Activated CD4-positive, alpha-beta T cell treated with anti-CD3 and anti-CD28 coated beads for 36 hours (primary cell): ENCODE measurements at regions of chr14 and their contacts with region 1.

Region 1: GRCh38 chr14:50830932-50831725 is at the start of gene NIN:
- DNase-seq: peak; percentile 84
- ATAC-seq: peak; percentile 89
- H3K4me3 Mint-ChIP-seq: peak within 1 kb of the TSS; percentile 91
- H3K27ac Mint-ChIP-seq: peak within 1 kb of the TSS; percentile 88
- H3K4me1 Mint-ChIP-seq: peaks cover 56% of the 10 kb centered on the region
- H3K27me3 Mint-ChIP-seq: peaks cover 6% of the 10 kb centered on the region
- total RNA-seq, gene NIN: 47.5 to 53.8 TPM

Region 2: DNA sequence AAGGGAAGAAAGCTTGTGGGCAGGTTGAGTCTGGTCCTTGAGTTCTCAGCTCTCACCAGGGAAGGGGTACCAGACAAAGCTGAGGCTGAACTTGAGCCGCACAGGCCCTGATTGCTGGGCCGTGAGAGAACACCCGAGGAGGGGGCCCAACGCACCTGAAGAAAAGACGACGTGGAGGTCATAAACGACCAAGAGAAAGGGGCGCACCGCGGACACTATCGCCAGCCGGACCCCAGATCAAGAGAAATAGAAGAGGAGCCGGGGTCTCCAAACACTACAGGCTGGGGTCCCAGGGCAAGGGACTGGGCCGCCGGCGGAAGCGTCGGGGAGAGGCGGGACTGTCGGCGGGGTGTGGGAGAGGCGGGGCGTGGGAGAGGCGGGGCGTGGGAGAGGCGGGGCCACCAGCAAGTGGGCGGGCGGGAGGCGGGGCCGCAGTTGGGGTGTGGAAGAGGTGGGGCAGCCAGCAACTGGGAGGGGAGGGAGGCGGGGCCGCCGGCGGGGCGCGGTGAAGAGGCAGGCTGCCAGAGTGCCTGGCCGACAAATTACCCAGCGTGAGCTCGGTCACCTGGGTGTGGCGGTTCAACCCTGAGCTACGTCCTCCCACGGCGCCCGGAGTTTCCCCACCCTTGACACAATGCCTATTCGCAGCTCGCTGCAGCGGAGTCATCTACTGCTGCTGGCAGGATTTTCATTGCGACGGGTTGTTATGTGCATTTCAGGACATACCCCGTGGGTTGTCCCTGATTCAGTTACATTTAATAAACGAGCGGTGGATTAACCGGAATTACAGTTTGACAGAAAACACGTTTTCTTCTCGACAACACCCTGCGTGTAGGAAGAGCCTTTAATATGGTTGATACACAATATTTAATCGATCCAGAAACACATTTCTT is 963.1 kb before region 1 on chr14:
- CTCF ChIA-PET with region 1: no interaction called
- POLR2A ChIA-PET with region 1: no interaction called
- intact Hi-C with region 1: loop called in 1 of 2 experiments (anchors 5 kb)
- DNase-seq: peak; percentile 100
- ATAC-seq: peak; percentile 87
- H3K4me3 Mint-ChIP-seq: peak overlapping the region; percentile 98
- H3K27ac Mint-ChIP-seq: peak overlapping the region; percentile 96
- H3K4me1 Mint-ChIP-seq: peaks cover 22% of the 10 kb centered on the region
- H3K27me3 Mint-ChIP-seq: no peaks in the 10 kb centered on the region

Region 3: GRCh38 chr14:50785457-50786063 is 45.6 kb before region 1 on chr14:
- CTCF ChIA-PET with region 1: interaction called, 21 read pairs
- POLR2A ChIA-PET with region 1: interaction called, 4 read pairs
- intact Hi-C with region 1: loop called (anchors 2 kb)
- DNase-seq: no peak
- ATAC-seq: no peak
- H3K4me3 Mint-ChIP-seq: no peak overlapping the region
- H3K27ac Mint-ChIP-seq: peak overlapping the region; percentile 6
- H3K4me1 Mint-ChIP-seq: peaks cover 66% of the 10 kb centered on the region
- H3K27me3 Mint-ChIP-seq: no peaks in the 10 kb centered on the region

Region 4: GRCh38 chr14:51228890-51229289 is 397.8 kb after region 1 on chr14:
- CTCF ChIA-PET with region 1: no interaction called
- POLR2A ChIA-PET with region 1: no interaction called
- intact Hi-C with region 1: no loop called
- DNase-seq: no peak
- ATAC-seq: no peak
- H3K4me3 Mint-ChIP-seq: no peak overlapping the region
- H3K27ac Mint-ChIP-seq: no peak overlapping the region
- H3K4me1 Mint-ChIP-seq: no peaks in the 10 kb centered on the region
- H3K27me3 Mint-ChIP-seq: no peaks in the 10 kb centered on the region

Region 5: DNA sequence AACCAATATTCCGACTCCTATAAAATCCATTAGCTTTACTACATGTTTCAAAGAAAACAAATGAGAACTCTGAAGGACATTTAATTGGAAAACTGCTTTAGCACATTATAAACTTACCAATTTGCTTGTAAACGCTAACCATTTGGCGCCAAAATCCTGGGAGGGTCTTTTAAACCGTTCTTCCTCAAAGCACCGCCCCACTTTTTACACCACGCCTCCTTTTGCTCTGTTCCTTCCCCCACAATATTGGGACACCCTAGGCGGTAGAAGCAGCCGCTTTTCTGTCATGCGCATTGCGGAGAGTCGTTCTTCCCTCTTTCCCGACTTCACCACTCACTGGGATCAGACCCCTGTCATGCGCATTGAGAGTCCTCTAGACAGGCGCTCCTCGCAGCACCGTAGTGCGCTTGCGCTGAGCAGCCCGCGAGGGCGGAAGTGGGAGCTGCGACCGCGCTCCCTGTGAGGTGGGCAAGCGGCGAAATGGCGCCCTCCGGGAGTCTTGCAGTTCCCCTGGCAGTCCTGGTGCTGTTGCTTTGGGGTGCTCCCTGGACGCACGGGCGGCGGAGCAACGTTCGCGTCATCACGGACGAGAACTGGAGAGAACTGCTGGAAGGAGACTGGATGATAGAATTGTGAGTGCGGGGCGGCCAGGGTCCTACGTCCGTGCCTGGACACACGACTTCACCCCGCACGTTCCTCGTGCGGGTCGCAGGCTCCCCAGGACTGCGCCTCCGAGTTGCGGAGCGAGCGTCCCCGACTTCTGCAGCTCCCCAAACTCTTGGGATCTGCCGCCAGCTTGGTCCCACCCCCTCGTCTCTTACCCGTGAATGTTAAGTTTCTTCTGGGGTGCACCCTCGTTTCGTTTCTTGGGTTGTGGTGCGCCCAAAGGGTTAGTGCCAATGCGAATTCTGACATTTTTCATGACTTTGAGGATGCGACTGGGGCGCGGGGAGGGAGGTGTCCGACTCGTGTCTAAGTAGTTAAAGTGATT is 409.0 kb after region 1 on chr14 and contains the start of gene TMX1:
- CTCF ChIA-PET with region 1: no interaction called
- POLR2A ChIA-PET with region 1: no interaction called
- intact Hi-C with region 1: loop called in 1 of 2 experiments (anchors 1 kb)
- DNase-seq: peak; percentile 94
- ATAC-seq: peak; percentile 93
- H3K4me3 Mint-ChIP-seq: no peak within 1 kb of the TSS
- H3K27ac Mint-ChIP-seq: no peak within 1 kb of the TSS
- H3K4me1 Mint-ChIP-seq: peaks cover 15% of the 10 kb centered on the region
- H3K27me3 Mint-ChIP-seq: no peaks in the 10 kb centered on the region
- total RNA-seq, gene TMX1: 38.8 to 55.9 TPM